CD4-positive, alpha-beta T cell (primary cell): ENCODE measurements at regions of chrX and their contacts with region 1.

Region 1: GRCh38 chrX:77617206-77617605 is 168.8 kb downstream of the ATRX start:
- DNase-seq: no peak
- ATAC-seq: no peak
- H3K4me3 ChIP-seq: no peak overlapping the region
- H3K4me3 Mint-ChIP-seq: no peak overlapping the region
- H3K27ac ChIP-seq: no peak overlapping the region
- H3K27ac Mint-ChIP-seq: no peak overlapping the region
- H3K4me1 ChIP-seq: no peaks in the 10 kb centered on the region
- H3K4me1 Mint-ChIP-seq: peaks cover 6% of the 10 kb centered on the region
- H3K27me3 ChIP-seq: no peaks in the 10 kb centered on the region
- H3K27me3 Mint-ChIP-seq: no peaks in the 10 kb centered on the region
- CTCF ChIP-seq: no peak

Region 2: GRCh38 chrX:77398330-77398729 is 218.9 kb before region 1 on chrX:
- CTCF ChIA-PET with region 1: no interaction called
- POLR2A ChIA-PET with region 1: no interaction called
- intact Hi-C with region 1: no loop called
- DNase-seq: no peak
- ATAC-seq: no peak
- H3K4me3 ChIP-seq: no peak overlapping the region
- H3K4me3 Mint-ChIP-seq: no peak overlapping the region
- H3K27ac ChIP-seq: no peak overlapping the region
- H3K27ac Mint-ChIP-seq: no peak overlapping the region
- H3K4me1 ChIP-seq: no peaks in the 10 kb centered on the region
- H3K4me1 Mint-ChIP-seq: no peaks in the 10 kb centered on the region
- H3K27me3 ChIP-seq: no peaks in the 10 kb centered on the region
- H3K27me3 Mint-ChIP-seq: no peaks in the 10 kb centered on the region
- CTCF ChIP-seq: no peak

Region 3: GRCh38 chrX:77505227-77505626 is 112.0 kb before region 1 on chrX:
- CTCF ChIA-PET with region 1: no interaction called
- POLR2A ChIA-PET with region 1: no interaction called
- intact Hi-C with region 1: loop called in 1 of 2 experiments (anchors 10 kb)
- DNase-seq: no peak
- ATAC-seq: no peak
- H3K4me3 ChIP-seq: no peak overlapping the region
- H3K4me3 Mint-ChIP-seq: no peak overlapping the region
- H3K27ac ChIP-seq: no peak overlapping the region
- H3K27ac Mint-ChIP-seq: peak overlapping the region; percentile 70
- H3K4me1 ChIP-seq: no peaks in the 10 kb centered on the region
- H3K4me1 Mint-ChIP-seq: peaks cover 16% of the 10 kb centered on the region
- H3K27me3 ChIP-seq: no peaks in the 10 kb centered on the region
- H3K27me3 Mint-ChIP-seq: no peaks in the 10 kb centered on the region
- CTCF ChIP-seq: no peak

Region 4: DNA sequence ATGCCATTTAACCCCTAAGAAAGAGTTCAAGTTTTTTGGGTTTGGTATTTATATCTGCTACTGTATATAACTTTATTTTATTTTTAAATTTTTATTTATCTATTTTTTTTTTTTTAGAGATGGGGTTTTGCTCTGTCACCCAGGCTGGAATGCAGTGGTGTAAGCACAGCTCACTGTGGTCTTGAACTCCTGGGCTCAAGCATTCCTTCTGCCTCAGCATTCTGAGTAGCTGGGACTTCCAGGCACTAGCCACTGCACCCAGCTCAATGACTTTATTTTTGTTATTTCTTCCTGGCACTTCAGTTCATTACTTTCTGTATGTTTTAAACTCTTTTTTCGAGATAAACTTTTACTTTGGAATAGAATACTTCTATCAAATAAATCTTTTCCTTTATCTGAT is 394.6 kb after region 1 on chrX:
- CTCF ChIA-PET with region 1: no interaction called
- POLR2A ChIA-PET with region 1: no interaction called
- intact Hi-C with region 1: no loop called
- DNase-seq: no peak
- ATAC-seq: no peak
- H3K4me3 ChIP-seq: no peak overlapping the region
- H3K4me3 Mint-ChIP-seq: no peak overlapping the region
- H3K27ac ChIP-seq: no peak overlapping the region
- H3K27ac Mint-ChIP-seq: no peak overlapping the region
- H3K4me1 ChIP-seq: no peaks in the 10 kb centered on the region
- H3K4me1 Mint-ChIP-seq: no peaks in the 10 kb centered on the region
- H3K27me3 ChIP-seq: no peaks in the 10 kb centered on the region
- H3K27me3 Mint-ChIP-seq: no peaks in the 10 kb centered on the region
- CTCF ChIP-seq: no peak